Caco-2 (cell line): ENCODE measurements at regions of chr7 and their contacts with region 1.

Region 1: GRCh38 chr7:20219446-20220292 is 2.5 kb upstream of the MACC1 start:
- DNase-seq: peak; percentile 94 to 98
- H3K4me3 ChIP-seq: no peak overlapping the region
- H3K4me3 Mint-ChIP-seq: peak overlapping the region; percentile 78
- H3K27ac Mint-ChIP-seq: peak overlapping the region; percentile 95
- H3K4me1 ChIP-seq: peaks cover 52% of the 10 kb centered on the region
- H3K4me1 Mint-ChIP-seq: peaks cover 48% of the 10 kb centered on the region
- H3K27me3 ChIP-seq: no peaks in the 10 kb centered on the region
- H3K27me3 Mint-ChIP-seq: no peaks in the 10 kb centered on the region
- CTCF ChIP-seq: no peak

Region 2: DNA sequence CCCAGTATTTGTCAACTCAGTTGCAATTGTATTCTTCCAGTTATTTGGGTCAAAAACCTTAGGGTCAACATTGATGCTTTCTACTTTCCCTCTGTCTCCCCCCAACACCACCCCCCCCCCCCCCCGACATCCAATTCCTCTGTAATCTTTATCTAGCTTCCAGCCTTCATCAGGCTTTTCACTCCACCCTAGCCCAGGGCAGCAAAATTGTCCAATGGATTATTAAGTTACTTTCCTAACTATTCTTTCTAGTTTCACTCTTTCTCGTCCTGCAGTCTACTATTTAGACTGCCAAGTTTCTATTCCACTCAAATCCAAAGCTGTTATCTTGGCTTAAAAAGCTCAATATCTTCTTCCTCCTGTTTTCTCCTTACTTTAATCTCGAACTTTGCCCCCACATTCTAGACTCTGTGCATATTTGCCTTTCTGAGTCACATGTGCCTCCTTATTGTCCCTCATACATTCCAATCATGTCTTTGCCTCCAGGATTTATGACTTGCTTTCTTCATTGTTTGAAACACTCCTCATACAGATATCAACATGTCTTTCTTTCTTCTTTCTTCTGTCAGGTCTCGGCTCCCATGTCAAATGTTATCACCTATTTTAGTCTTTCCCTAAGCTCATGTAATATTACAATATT is 249.7 kb before region 1 on chr7:
- CTCF ChIA-PET with region 1: no interaction called
- POLR2A ChIA-PET with region 1: interaction called, 9 read pairs
- intact Hi-C with region 1: loop called (anchors 1 kb)
- DNase-seq: peak; percentile 79 to 83
- H3K4me3 ChIP-seq: no peak overlapping the region
- H3K4me3 Mint-ChIP-seq: peak overlapping the region; percentile 55
- H3K27ac Mint-ChIP-seq: peak overlapping the region; percentile 86
- H3K4me1 ChIP-seq: peaks cover 44% of the 10 kb centered on the region
- H3K4me1 Mint-ChIP-seq: peaks cover 26% of the 10 kb centered on the region
- H3K27me3 ChIP-seq: no peaks in the 10 kb centered on the region
- H3K27me3 Mint-ChIP-seq: no peaks in the 10 kb centered on the region
- CTCF ChIP-seq: no peak

Region 3: DNA sequence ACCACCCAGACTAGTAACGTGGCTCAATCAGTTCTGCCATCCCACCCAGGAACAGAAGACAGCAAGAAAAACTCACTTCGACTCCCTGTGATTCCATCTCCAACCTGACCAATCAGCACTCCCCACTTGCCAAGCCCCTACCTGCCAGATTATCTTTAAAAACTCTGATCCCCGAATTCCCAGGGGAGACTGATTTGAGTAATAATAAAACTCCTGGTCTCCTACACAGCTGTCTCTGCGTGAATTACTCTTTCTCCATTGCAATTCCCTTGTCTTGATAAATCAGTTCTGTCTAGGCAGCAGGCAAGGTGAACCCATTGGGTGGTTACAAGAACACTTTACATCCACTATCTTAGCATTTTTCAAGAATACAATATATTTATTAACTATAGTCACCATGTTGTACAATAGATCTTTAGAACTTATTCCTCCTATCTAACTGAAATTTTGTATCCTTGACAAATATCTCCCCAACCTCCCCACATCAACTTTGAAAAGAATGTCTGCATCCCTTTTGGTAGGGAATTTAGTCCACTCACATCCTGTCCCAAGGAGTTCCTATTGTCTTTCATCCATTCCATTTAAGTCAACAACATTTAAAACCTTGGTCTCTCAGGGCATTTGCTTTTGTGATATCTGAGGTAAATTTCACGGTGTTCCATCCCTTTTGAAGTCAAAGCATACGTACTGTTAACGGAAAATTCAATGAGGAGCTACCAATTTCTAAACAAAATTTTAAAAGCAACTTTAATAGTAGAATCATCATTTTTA is 166.2 kb before region 1 on chr7:
- CTCF ChIA-PET with region 1: no interaction called
- POLR2A ChIA-PET with region 1: interaction called, 4 read pairs
- intact Hi-C with region 1: loop called (anchors 1 kb)
- DNase-seq: no peak
- H3K4me3 ChIP-seq: no peak overlapping the region
- H3K4me3 Mint-ChIP-seq: no peak overlapping the region
- H3K27ac Mint-ChIP-seq: peak overlapping the region; percentile 74
- H3K4me1 ChIP-seq: peaks cover 36% of the 10 kb centered on the region
- H3K4me1 Mint-ChIP-seq: peaks cover 28% of the 10 kb centered on the region
- H3K27me3 ChIP-seq: no peaks in the 10 kb centered on the region
- H3K27me3 Mint-ChIP-seq: no peaks in the 10 kb centered on the region
- CTCF ChIP-seq: no peak

Region 4: GRCh38 chr7:20146451-20146850 is 73.2 kb before region 1 on chr7:
- CTCF ChIA-PET with region 1: no interaction called
- POLR2A ChIA-PET with region 1: no interaction called
- intact Hi-C with region 1: no loop called
- DNase-seq: no peak
- H3K4me3 ChIP-seq: no peak overlapping the region
- H3K4me3 Mint-ChIP-seq: no peak overlapping the region
- H3K27ac Mint-ChIP-seq: no peak overlapping the region
- H3K4me1 ChIP-seq: peaks cover 9% of the 10 kb centered on the region; the same call in 1 of the 2 replicates
- H3K4me1 Mint-ChIP-seq: peaks cover 19% of the 10 kb centered on the region
- H3K27me3 ChIP-seq: no peaks in the 10 kb centered on the region
- H3K27me3 Mint-ChIP-seq: no peaks in the 10 kb centered on the region
- CTCF ChIP-seq: no peak

Region 5: GRCh38 chr7:20172736-20173334 is 46.8 kb before region 1 on chr7:
- CTCF ChIA-PET with region 1: no interaction called
- POLR2A ChIA-PET with region 1: interaction called, 4 read pairs
- intact Hi-C with region 1: loop called (anchors 2 kb)
- DNase-seq: peak; percentile 78 to 82
- H3K4me3 ChIP-seq: no peak overlapping the region
- H3K4me3 Mint-ChIP-seq: no peak overlapping the region
- H3K27ac Mint-ChIP-seq: no peak overlapping the region
- H3K4me1 ChIP-seq: peaks cover 6% of the 10 kb centered on the region
- H3K4me1 Mint-ChIP-seq: peaks cover 21% of the 10 kb centered on the region
- H3K27me3 ChIP-seq: no peaks in the 10 kb centered on the region
- H3K27me3 Mint-ChIP-seq: no peaks in the 10 kb centered on the region
- CTCF ChIP-seq: peak; percentile 69 to 88

Region 6: DNA sequence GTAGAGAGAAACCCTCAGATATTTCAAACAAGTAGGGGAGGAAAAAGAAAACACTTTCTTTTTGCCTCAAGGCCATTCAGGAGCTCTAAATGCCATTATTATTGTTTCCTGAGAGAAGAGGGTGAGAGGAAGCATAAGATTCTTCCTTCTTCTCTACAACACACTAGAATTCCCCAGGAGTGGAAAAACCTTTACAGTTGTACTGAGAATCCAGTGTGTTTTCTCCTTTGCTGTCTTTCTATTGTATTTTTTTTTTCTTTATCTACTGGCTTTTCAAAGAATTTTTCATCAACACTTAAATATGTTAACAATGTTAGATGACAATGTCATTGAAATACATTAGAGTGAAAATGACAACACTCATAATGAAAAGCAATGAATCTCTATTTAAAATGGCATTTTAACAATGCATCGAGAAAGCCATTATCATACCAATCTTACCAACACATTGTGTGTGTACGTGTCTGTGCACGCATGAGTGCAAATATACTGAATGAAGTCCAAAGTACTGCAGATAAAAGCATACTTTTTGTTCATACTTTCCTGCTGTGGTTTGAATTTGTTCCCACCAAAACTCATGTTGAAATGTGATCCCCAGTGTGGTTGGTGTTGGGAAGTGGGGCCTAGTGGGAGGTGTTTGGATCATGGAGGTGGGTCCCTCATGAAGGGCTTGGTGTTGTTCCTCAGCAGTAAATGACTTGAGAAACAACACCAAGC is 21.7 kb after region 1 on chr7:
- CTCF ChIA-PET with region 1: no interaction called
- POLR2A ChIA-PET with region 1: no interaction called
- intact Hi-C with region 1: loop called (anchors 1 kb)
- DNase-seq: peak; percentile 28 to 56
- H3K4me3 ChIP-seq: no peak overlapping the region
- H3K4me3 Mint-ChIP-seq: no peak overlapping the region
- H3K27ac Mint-ChIP-seq: peak overlapping the region; percentile 71
- H3K4me1 ChIP-seq: peaks cover 26% of the 10 kb centered on the region
- H3K4me1 Mint-ChIP-seq: peaks cover 21% of the 10 kb centered on the region
- H3K27me3 ChIP-seq: no peaks in the 10 kb centered on the region
- H3K27me3 Mint-ChIP-seq: no peaks in the 10 kb centered on the region
- CTCF ChIP-seq: no peak

Region 7: GRCh38 chr7:20310963-20311742 is 91.5 kb after region 1 on chr7:
- CTCF ChIA-PET with region 1: interaction called, 6 read pairs
- POLR2A ChIA-PET with region 1: interaction called, 4 read pairs
- intact Hi-C with region 1: loop called (anchors 1 kb)
- DNase-seq: peak in 1 of 2 experiments; percentile 58
- H3K4me3 ChIP-seq: no peak overlapping the region
- H3K4me3 Mint-ChIP-seq: no peak overlapping the region
- H3K27ac Mint-ChIP-seq: no peak overlapping the region
- H3K4me1 ChIP-seq: peaks cover 27% of the 10 kb centered on the region
- H3K4me1 Mint-ChIP-seq: peaks cover 32% of the 10 kb centered on the region
- H3K27me3 ChIP-seq: no peaks in the 10 kb centered on the region
- H3K27me3 Mint-ChIP-seq: no peaks in the 10 kb centered on the region
- CTCF ChIP-seq: peak; percentile 38 to 51

Region 8: GRCh38 chr7:20684581-20684980 is 464.9 kb after region 1 on chr7:
- CTCF ChIA-PET with region 1: no interaction called
- POLR2A ChIA-PET with region 1: no interaction called
- intact Hi-C with region 1: no loop called
- DNase-seq: no peak
- H3K4me3 ChIP-seq: no peak overlapping the region
- H3K4me3 Mint-ChIP-seq: no peak overlapping the region
- H3K27ac Mint-ChIP-seq: no peak overlapping the region
- H3K4me1 ChIP-seq: peaks cover 9% of the 10 kb centered on the region; the same call in 1 of the 2 replicates
- H3K4me1 Mint-ChIP-seq: peaks cover 7% of the 10 kb centered on the region
- H3K27me3 ChIP-seq: no peaks in the 10 kb centered on the region
- H3K27me3 Mint-ChIP-seq: no peaks in the 10 kb centered on the region
- CTCF ChIP-seq: no peak

Region 9: DNA sequence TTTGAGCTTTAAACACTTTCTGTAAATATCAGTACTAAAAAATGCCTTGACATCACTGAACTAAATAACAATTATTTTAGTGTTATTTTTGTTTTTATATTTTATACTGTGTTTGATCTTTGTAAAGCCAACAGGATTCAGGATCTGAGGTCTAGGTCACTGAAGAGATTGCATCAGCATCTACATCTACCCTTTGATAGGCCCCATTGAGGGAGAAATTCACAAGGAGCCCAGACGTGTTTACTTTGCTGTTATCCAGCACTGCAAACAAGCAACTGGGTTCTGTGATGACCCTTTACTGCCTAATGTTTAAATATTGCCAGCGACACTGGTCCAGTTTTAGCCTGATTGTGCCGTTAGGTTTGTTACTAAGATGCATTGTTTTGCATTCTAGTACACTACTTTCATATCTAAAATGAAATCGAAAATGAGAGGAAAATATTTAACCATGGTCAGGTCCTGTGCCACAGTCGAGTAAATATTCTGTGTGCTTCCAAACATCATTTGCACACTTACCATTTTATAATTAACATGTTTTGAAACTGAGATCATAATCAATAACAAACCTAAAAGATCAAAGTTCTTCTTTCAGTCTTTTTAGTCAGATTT is 518.3 kb after region 1 on chr7:
- CTCF ChIA-PET with region 1: no interaction called
- POLR2A ChIA-PET with region 1: no interaction called
- intact Hi-C with region 1: loop called (anchors 2 kb)
- DNase-seq: peak; percentile 63 to 78
- H3K4me3 ChIP-seq: no peak overlapping the region
- H3K4me3 Mint-ChIP-seq: peak overlapping the region; percentile 79
- H3K27ac Mint-ChIP-seq: peak overlapping the region; percentile 90
- H3K4me1 ChIP-seq: peaks cover 65% of the 10 kb centered on the region
- H3K4me1 Mint-ChIP-seq: peaks cover 53% of the 10 kb centered on the region
- H3K27me3 ChIP-seq: no peaks in the 10 kb centered on the region
- H3K27me3 Mint-ChIP-seq: no peaks in the 10 kb centered on the region
- CTCF ChIP-seq: no peak